AG04449 (cell line): ENCODE measurements at regions of chr15 and their contacts with region 1.

Region 1: GRCh38 chr15:74053941-74054529 is 28.3 kb downstream of the GOLGA6A start:
- DNase-seq: no peak
- H3K4me3 ChIP-seq: no peak overlapping the region
- CTCF ChIP-seq: peak; percentile 79

Region 2: DNA sequence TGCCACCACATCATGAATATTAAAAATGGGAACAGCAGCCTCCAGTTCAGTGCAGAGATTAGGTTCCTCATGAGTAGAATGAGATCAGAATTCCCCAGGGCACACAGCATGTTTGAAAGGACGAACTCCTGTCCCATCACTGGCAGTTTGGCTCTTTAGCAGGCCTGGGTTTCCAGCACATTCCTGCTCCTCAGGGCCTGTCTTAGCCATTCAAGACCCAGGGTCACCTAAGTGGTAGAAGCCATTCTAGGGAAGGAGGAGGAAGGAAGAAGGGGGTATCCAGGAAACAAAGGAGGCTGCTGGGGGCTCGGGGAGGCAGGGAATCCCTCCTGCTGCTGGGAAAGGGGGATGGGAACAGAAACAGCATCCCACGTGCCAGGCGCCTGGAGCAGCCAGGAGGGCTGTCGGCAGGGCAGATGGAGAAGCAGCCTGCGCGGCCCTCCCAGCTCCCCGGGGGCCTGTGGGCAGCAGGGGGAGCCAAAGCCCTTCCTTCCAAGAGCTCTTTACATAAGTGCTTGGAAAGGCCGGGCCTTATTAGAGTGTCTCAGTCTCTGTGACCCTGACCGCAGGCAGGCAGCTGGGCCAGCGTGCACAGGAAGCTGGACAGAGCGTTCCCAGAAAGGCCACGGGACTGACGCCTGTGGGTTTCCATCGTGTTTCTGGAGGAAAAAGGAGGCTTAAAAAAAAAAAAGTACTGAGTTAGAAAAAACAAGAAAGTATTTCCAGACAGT is 103.0 kb before region 1 on chr15:
- CTCF ChIA-PET with region 1: interaction called, 11 read pairs
- POLR2A ChIA-PET with region 1: no interaction called
- DNase-seq: peak; percentile 91
- H3K4me3 ChIP-seq: no peak overlapping the region
- CTCF ChIP-seq: peak; percentile 93

Region 3: DNA sequence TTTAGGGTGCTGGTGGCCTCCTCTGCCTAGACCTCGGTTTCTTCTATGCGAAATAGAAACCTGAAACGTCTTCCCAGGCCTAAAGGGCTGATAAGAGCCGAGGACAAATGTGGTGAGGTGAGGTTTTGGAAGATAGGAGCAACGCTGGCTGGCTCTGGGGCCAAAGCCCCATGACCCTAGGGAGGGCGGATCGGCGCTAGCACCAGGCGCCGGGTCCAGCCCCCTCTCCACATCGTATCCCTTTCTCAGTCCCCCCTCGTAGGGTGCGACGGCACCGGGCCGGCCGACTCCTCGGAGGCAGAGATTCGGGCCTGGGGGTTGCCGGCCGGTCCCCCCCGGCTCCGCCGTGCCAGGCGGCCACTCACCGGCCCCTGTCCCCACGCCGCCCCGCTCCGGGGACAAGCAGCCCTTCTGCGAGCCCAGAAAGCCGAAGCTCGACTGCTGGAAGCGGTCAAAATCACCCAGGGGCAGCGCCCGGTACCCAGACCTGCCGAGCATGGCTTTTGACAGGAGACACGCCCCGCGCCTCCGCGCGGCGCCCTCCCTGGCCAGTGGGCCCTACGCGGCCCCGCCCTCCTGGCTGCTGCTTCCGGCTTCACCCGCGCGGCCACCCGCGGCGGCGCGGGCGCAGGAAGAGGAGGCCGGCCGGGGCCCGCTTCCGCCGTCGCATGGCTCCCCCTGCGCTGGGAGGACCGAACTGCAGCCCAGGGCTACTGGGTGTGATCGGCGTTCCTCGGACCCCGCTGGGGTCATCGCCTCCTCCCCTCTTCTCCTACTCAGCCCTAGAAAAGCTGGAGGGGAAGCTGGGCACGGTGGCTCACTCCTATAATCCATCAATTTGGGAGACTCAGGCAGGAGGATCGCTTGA is 62.1 kb before region 1 on chr15 and contains the start of gene STOML1:
- CTCF ChIA-PET with region 1: interaction called, 40 read pairs
- POLR2A ChIA-PET with region 1: interaction called, 3 read pairs
- DNase-seq: no peak
- H3K4me3 ChIP-seq: peak within 1 kb of the TSS; percentile 71
- CTCF ChIP-seq: peak; percentile 85

Region 4: DNA sequence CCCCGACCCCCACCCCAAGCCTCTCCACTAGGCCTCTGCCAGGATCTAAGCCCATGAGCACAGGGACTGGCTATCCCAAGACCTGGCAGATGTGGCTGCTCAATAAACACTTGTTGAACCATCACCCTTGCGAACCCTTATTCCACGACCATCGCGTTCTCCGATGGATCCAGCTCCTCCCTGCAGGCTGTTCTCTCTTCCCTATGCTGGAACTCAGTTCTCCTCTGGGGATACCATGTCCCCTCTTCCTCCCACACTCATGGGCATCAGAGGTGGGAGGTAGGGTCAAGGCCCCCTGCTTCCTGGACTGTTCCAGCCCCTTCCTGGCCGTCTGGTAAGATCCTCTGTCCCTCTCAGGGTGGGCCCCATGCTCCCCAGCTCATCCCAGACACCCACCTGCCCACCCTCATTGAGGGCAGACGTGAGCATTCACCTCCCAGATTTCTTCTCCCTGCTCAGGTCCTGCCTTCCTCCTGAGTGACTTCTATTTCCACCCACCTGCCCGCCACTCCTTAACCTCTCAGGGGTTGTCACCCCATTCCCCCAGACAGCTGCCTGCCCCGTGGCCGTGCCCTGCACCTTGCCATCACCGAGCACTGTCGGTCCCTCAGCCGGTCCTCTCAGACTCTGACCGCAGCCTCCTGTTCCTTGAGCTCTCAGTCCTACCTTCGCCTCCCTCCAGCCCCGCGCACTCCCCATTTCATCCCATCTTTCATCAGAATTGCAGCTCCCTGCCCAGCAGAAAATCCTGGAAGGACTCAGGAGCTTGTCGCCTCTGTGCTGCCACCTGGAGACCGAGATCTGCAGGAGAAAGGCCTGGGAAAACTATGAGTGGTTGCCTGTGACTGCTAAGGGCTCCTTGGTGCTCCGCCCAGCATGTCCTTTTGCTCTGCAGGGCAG is 17.5 kb before region 1 on chr15:
- CTCF ChIA-PET with region 1: interaction called, 232 read pairs
- POLR2A ChIA-PET with region 1: interaction called, 7 read pairs
- DNase-seq: no peak
- H3K4me3 ChIP-seq: no peak overlapping the region
- CTCF ChIP-seq: peak; percentile 78

Region 5: GRCh38 chr15:74302821-74303359 is 248.9 kb after region 1 on chr15:
- CTCF ChIA-PET with region 1: interaction called, 554 read pairs
- POLR2A ChIA-PET with region 1: interaction called, 3 read pairs
- DNase-seq: no peak
- H3K4me3 ChIP-seq: no peak overlapping the region
- CTCF ChIP-seq: peak; percentile 68